ENCODE measurements at regions of chr10 and their contacts with region 1.

Region 1: DNA sequence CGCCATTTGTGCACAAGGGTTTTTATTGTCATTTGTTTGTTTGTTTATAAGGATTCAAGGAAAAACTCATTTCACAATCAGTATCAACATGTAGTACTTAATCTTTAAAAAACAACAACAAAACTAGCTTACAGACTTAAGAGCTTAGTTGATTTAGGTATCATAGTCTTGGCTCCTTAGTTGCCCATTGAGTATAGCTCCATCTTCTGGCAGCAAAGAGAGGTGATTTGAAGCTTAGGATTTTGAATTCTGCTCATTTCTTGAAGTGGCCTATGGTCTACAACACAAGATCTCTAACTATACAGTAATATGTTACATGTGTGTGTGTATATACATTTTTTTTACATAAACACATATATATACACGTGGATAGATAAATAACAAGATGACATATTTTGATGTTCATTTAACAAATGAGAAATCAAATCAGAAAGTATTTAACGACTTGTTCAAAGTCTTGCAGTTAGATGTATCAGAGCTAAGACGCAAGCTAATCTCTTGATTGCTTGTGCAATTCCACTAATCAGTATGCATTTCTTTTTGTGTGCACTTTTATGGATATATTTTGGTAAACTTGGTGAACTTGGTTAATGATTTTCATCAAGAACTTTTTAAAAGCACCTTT is 307.3 kb downstream of the CAMK1D start:
- DNase-seq: peak in 7 of 9 donors; percentile 25 to 73 (median 55)
- ATAC-seq: peak; percentile 86
- H3K4me3 ChIP-seq: no peak overlapping the region
- H3K4me3 Mint-ChIP-seq: peak overlapping the region in 1 of 10 donors; percentile 55
- H3K27ac ChIP-seq: no peak overlapping the region
- H3K27ac Mint-ChIP-seq: peak overlapping the region in 4 of 9 donors; percentile 29 to 68 (median 42)
- H3K4me1 ChIP-seq: no peaks in the 10 kb centered on the region
- H3K4me1 Mint-ChIP-seq: peaks cover 0 to 22% (median 4%) of the 10 kb centered on the region in 7 donors
- H3K27me3 ChIP-seq: no peaks in the 10 kb centered on the region
- H3K27me3 Mint-ChIP-seq: no peaks in the 10 kb centered on the region

Region 2: DNA sequence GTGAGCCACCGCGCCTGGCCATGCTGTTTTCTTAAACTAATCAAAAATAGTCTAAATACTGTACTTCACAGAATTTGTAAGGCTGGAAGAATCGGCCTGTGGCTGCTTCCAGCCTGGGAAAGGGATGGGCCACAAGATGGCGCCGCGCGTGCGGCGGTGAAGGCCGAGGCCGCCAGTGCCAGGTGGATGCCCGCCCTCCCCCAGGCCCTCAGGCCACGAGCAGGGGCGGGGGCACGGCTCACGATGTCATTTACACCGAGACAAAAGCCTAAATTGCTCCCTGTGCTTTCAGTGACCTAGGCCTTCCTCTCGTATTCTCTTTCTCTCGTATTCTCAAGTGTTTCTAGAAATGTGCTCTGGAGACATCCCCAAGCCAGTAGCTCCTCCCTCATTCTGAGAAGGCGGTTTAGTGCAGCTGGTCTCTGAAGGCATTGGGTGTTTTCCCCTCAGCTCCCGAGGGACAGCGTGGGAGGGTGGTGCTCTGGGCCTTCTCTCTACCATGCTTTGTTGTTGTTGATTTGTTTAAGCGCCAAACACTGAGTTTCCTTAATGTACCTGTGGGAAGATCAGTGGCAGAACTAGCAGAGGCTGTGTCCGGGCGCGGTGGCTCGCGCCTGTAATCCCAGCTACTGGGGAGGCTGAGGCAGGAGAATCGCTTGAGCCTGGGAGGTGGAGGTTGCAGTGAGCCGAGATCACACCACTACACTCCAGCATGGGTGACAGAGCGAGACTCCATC is 392.3 kb before region 1 on chr10:
- CTCF ChIA-PET with region 1: interaction called, 73 read pairs
- POLR2A ChIA-PET with region 1: interaction called, 3 read pairs
- intact Hi-C with region 1: loop called (anchors 1 kb)
- DNase-seq: peak; percentile 45 to 75 (median 67)
- ATAC-seq: peak; percentile 73
- H3K4me3 ChIP-seq: peak overlapping the region; percentile 45
- H3K4me3 Mint-ChIP-seq: peak overlapping the region; percentile 58 to 81 (median 72)
- H3K27ac ChIP-seq: no peak overlapping the region
- H3K27ac Mint-ChIP-seq: peak overlapping the region in 7 of 9 donors; percentile 10 to 87 (median 51)
- H3K4me1 ChIP-seq: no peaks in the 10 kb centered on the region
- H3K4me1 Mint-ChIP-seq: peaks cover 0 to 26% (median 5%) of the 10 kb centered on the region in 7 donors
- H3K27me3 ChIP-seq: no peaks in the 10 kb centered on the region
- H3K27me3 Mint-ChIP-seq: no peaks in the 10 kb centered on the region

Region 3: DNA sequence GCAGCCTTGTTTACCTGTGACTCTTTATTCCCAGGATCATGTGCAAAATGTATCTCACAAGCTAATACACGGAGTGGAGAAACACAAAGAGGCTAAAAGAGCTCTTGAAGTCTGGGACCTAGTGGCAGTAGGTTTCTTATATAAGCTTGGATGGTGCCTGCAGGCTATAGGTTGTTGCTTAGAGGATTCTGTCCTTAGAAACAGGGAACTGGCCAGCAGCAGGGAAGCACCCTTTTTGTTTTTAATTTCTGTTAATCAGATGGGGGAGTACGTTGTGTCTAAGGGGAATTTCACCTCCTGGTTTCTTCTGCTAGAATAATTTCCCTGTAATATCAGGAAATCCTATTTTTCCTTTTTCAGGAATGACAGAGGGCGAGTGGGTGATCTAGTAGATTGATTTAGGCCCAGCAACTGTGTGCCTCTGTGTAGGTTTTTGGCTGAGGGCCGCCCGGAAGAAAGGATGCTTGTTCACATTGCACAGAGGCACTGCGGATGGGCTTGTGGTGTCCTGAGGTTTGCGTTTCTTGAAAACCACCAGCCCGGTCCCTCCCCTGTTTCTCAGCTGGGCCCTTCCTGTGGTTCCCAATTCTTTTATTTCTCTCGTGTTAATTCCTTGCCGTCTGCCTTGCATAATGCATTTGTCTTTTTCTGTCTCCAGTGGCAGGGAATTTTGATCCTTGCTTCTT is 149.3 kb before region 1 on chr10:
- CTCF ChIA-PET with region 1: no interaction called
- POLR2A ChIA-PET with region 1: no interaction called
- intact Hi-C with region 1: loop called in 1 of 2 experiments (anchors 5 kb)
- DNase-seq: no peak
- ATAC-seq: peak; percentile 30
- H3K4me3 ChIP-seq: no peak overlapping the region
- H3K4me3 Mint-ChIP-seq: peak overlapping the region; percentile 1 to 71 (median 35)
- H3K27ac ChIP-seq: no peak overlapping the region
- H3K27ac Mint-ChIP-seq: peak overlapping the region in 7 of 9 donors; percentile 14 to 85 (median 25)
- H3K4me1 ChIP-seq: peaks cover 0 to 34% of the 10 kb centered on the region in 2 donors
- H3K4me1 Mint-ChIP-seq: peaks cover 47 to 86% (median 69%) of the 10 kb centered on the region in 7 donors
- H3K27me3 ChIP-seq: no peaks in the 10 kb centered on the region
- H3K27me3 Mint-ChIP-seq: no peaks in the 10 kb centered on the region

Region 4: DNA sequence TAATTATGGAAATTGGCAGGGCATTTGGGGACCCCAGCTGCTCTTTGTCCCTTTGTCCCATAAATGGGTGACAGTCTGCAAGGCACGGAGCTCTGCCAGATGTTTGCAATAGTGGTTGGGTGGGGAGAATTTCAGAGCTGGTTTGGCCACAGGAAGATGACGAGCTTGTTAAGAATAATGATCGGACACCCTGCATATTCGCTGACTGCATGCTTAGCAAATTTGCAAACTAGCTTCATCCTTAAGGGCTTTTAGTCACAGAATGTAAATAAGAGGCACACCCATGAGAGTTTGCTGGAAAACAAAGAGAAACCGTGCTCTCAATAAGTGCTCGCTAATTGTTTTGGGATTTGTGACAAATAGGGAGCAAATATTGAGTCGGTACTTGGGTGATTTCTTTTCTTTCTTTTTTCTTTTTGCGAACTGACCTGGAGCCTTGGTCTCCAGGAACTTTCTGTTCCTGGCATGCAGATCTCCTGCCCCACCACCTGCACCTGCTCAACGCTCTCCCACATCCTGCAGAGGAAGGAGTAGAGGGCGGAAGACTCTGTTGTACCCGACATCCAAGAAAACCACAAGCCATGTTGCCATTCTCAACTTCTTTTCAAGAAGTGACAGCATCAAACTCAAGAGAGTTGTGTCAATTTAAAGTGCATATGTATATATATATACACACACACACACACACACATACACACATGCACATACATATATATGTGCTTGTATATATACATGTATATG is 68.3 kb before region 1 on chr10:
- CTCF ChIA-PET with region 1: interaction called, 5 read pairs
- POLR2A ChIA-PET with region 1: no interaction called
- intact Hi-C with region 1: loop called in 1 of 2 experiments (anchors 1 kb)
- DNase-seq: peak in 7 of 9 donors; percentile 40 to 76 (median 71)
- ATAC-seq: peak; percentile 81
- H3K4me3 ChIP-seq: peak overlapping the region; percentile 36
- H3K4me3 Mint-ChIP-seq: peak overlapping the region; percentile 67 to 91 (median 86)
- H3K27ac ChIP-seq: no peak overlapping the region
- H3K27ac Mint-ChIP-seq: peak overlapping the region; percentile 41 to 92 (median 84)
- H3K4me1 ChIP-seq: peaks cover 18 to 41% of the 10 kb centered on the region in 2 donors
- H3K4me1 Mint-ChIP-seq: peaks cover 35 to 89% (median 79%) of the 10 kb centered on the region in 7 donors
- H3K27me3 ChIP-seq: no peaks in the 10 kb centered on the region
- H3K27me3 Mint-ChIP-seq: no peaks in the 10 kb centered on the region

Region 5: DNA sequence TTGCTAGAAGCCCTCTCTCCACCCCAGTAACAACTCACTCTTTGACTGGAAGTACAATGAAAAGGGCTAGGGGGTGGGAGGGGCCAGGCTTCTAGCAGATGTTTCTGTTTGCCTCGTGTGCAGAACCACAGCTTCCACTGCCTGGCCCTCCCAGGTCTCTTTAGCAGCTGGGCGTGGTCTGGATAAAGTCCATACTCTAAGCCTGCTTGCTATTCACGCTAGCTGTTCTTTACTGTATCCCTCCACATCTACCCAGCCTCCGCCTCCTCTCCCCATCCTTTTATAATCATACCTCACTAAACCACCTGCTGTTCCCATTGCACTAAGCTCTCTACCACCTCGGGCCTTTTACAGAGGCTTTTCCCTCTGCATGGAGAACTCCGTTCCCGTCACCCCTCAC is 18.5 kb before region 1 on chr10:
- CTCF ChIA-PET with region 1: interaction called, 5 read pairs
- POLR2A ChIA-PET with region 1: no interaction called
- intact Hi-C with region 1: loop called in 1 of 2 experiments (anchors 1 kb)
- DNase-seq: peak in 1 of 9 donors; percentile 14
- ATAC-seq: no peak
- H3K4me3 ChIP-seq: no peak overlapping the region
- H3K4me3 Mint-ChIP-seq: peak overlapping the region in 8 of 10 donors; percentile 1 to 69 (median 24)
- H3K27ac ChIP-seq: no peak overlapping the region
- H3K27ac Mint-ChIP-seq: peak overlapping the region in 6 of 9 donors; percentile 16 to 90 (median 54)
- H3K4me1 ChIP-seq: peaks cover 0 to 20% of the 10 kb centered on the region in 2 donors
- H3K4me1 Mint-ChIP-seq: peaks cover 24 to 63% (median 51%) of the 10 kb centered on the region in 7 donors
- H3K27me3 ChIP-seq: no peaks in the 10 kb centered on the region
- H3K27me3 Mint-ChIP-seq: no peaks in the 10 kb centered on the region

Region 6: DNA sequence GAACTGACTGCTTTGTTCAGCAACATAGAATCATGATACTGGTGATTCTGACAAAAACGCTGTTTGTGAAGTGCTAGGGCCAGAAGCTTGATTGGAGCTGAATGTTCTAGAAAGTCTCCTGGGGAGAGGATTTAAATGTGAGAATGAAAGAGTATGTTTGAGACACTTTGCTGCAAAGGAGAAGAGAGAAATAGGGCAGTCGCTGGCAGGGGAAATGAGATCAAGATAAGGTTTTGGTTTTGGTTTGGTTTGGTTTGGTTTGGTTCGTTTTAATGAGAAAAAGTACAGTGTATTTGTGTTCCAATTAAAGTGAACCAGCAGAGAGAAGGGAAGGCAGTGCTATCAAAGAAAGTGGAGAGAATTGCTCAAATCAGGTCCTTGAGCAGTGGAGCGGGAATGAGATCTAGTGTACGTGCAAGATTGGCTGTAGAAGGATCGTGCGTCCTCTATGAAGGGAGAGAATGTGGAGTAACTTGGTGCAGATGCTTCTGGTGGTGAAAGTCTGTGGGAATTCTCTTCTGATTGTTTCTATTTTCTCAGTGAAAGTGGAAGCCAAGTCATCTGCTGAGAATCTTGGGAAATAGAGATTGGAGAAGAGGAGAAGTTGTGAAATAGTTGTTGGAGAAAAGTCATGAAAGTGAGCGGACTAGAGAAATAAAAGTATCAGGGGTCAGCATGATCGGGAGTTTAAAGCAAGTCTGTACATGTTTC is 74.3 kb after region 1 on chr10:
- CTCF ChIA-PET with region 1: no interaction called
- POLR2A ChIA-PET with region 1: no interaction called
- intact Hi-C with region 1: no loop called
- DNase-seq: no peak
- ATAC-seq: no peak
- H3K4me3 ChIP-seq: no peak overlapping the region
- H3K4me3 Mint-ChIP-seq: no peak overlapping the region
- H3K27ac ChIP-seq: no peak overlapping the region
- H3K27ac Mint-ChIP-seq: no peak overlapping the region
- H3K4me1 ChIP-seq: peaks cover 0 to 6% of the 10 kb centered on the region in 2 donors
- H3K4me1 Mint-ChIP-seq: peaks cover 0 to 10% (median 6%) of the 10 kb centered on the region in 7 donors
- H3K27me3 ChIP-seq: no peaks in the 10 kb centered on the region
- H3K27me3 Mint-ChIP-seq: no peaks in the 10 kb centered on the region

Region 7: GRCh38 chr10:12806228-12807095 is 149.8 kb after region 1 on chr10:
- CTCF ChIA-PET with region 1: no interaction called
- POLR2A ChIA-PET with region 1: no interaction called
- intact Hi-C with region 1: no loop called
- DNase-seq: no peak
- ATAC-seq: no peak
- H3K4me3 ChIP-seq: no peak overlapping the region
- H3K4me3 Mint-ChIP-seq: no peak overlapping the region
- H3K27ac ChIP-seq: no peak overlapping the region
- H3K27ac Mint-ChIP-seq: no peak overlapping the region
- H3K4me1 ChIP-seq: no peaks in the 10 kb centered on the region
- H3K4me1 Mint-ChIP-seq: no peaks in the 10 kb centered on the region
- H3K27me3 ChIP-seq: no peaks in the 10 kb centered on the region
- H3K27me3 Mint-ChIP-seq: no peaks in the 10 kb centered on the region

Measured in naive thymus-derived CD4-positive, alpha-beta T cell (primary cell).